ENCODE measurements at regions of chr12 and their contacts with region 1.

Region 1: DNA sequence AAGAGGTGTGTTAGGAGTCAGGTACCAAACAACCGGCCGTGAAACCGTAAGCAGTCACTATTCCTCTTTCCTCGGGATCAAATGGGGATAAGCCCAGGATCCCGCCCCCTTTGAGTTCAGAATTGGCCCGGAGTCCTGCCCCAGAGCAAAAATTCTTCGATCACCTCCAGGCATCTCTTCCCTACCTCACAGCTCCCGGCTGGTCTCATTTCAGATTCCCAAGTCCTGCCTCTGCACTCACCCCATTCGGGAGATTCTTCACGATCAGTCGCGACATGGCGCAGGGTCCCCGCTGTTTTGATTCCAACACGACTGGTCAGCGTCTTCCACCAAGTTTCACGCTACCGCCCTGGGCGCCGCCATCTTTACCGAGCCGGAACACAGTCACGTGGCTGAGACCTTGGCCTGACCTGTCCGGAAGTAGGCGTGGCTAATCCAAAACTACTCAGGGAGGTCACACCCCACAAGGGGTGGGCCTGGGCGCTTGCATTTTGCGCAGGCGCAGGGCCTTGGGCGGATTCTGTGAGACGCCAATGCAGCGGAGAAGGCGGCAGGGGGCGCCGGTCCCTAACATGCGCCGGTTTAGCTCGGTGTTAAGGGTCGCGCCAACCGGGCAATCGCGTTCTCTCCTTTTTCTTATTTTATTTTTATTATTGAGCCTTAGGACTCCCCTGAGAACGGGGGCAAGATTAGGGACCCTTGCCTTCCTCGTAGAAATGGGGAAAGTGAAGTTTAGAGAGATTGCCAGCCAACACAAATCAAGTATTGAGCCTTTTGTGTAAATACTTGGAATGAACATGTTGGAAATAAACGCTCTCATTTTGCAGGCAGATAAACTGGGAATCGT is at the start of gene RBM19:
- DNase-seq: peak; percentile 80
- ATAC-seq: peak; percentile 90
- H3K4me3 ChIP-seq: peak within 1 kb of the TSS; percentile 87
- H3K27ac ChIP-seq: peak within 1 kb of the TSS; percentile 66
- H3K4me1 ChIP-seq: peaks cover 15% of the 10 kb centered on the region
- H3K27me3 ChIP-seq: no peaks in the 10 kb centered on the region
- CTCF ChIP-seq: peak; percentile 91 to 98 (median 93); a peak in 5 of 6 replicates
- EP300 ChIP-seq: no peak
- POLR2A ChIP-seq: peak; percentile 91
- RAD21 ChIP-seq: peak; percentile 47
- polyA plus RNA-seq, gene RBM19: 4.2 to 7.8 TPM

Region 2: DNA sequence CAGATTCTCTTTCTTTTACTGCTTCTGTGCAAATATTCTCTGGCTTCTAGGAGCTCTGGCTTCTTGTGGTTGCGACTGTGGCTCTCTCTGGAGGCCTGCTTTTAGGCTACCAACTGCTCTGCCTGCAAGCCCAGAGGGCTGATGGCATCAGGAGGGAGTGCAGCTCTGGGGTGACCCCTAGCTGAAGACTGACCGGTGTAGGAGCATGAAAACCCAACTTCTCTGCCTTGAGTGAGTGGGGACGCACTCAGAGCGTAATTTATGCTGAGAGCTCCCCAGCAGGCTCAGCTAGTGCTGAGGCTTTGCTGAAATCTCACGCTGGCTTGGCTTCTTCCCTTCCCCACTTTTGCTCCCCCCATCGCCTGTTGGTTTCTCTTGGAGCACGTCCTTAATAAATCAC is 29.9 kb after region 1 on chr12:
- CTCF ChIA-PET with region 1: interaction called, 10 read pairs
- POLR2A ChIA-PET with region 1: no interaction called
- RAD21 ChIA-PET with region 1: interaction called, 3 read pairs
- SMC1A ChIA-PET with region 1: no interaction called
- in situ Hi-C with region 1: no loop called
- intact Hi-C with region 1: no loop called
- DNase-seq: no peak
- ATAC-seq: peak; percentile 59
- H3K4me3 ChIP-seq: no peak overlapping the region
- H3K27ac ChIP-seq: no peak overlapping the region
- H3K4me1 ChIP-seq: no peaks in the 10 kb centered on the region
- H3K27me3 ChIP-seq: peaks cover 0 to 4% of the 10 kb centered on the region in 2 experiments; a peak in 1 of 4 replicates
- CTCF ChIP-seq: peak in 1 of 3 experiments; percentile 19; a peak in 2 of 6 replicates
- EP300 ChIP-seq: no peak
- POLR2A ChIP-seq: no peak
- RAD21 ChIP-seq: no peak

Region 3: GRCh38 chr12:114508529-114509129 is 542.5 kb after region 1 on chr12:
- CTCF ChIA-PET with region 1: interaction called, 19 read pairs
- POLR2A ChIA-PET with region 1: no interaction called
- RAD21 ChIA-PET with region 1: interaction called, 6 read pairs
- SMC1A ChIA-PET with region 1: interaction called, 14 read pairs
- in situ Hi-C with region 1: no loop called
- intact Hi-C with region 1: no loop called
- DNase-seq: peak; percentile 16
- ATAC-seq: peak; percentile 84
- H3K4me3 ChIP-seq: no peak overlapping the region
- H3K27ac ChIP-seq: no peak overlapping the region
- H3K4me1 ChIP-seq: no peaks in the 10 kb centered on the region
- H3K27me3 ChIP-seq: no peaks in the 10 kb centered on the region
- CTCF ChIP-seq: peak; percentile 62 to 82 (median 72); a peak in 4 of 6 replicates
- EP300 ChIP-seq: no peak
- POLR2A ChIP-seq: no peak
- RAD21 ChIP-seq: peak; percentile 79

Measured in GM12878 (cell line).